IMR-90 (cell line): ENCODE measurements at regions of chr1 and their contacts with region 1.

Region 1: GRCh38 chr1:76957961-76958360 is 90.7 kb downstream of the ST6GALNAC5 start:
- DNase-seq: no peak
- ATAC-seq: no peak
- H3K4me3 ChIP-seq: no peak overlapping the region
- H3K27ac ChIP-seq: no peak overlapping the region
- H3K4me1 ChIP-seq: no peaks in the 10 kb centered on the region
- H3K27me3 ChIP-seq: no peaks in the 10 kb centered on the region
- CTCF ChIP-seq: no peak
- POLR2A ChIP-seq: no peak
- RAD21 ChIP-seq: no peak

Region 2: GRCh38 chr1:76939050-76939816 is 18.7 kb before region 1 on chr1:
- CTCF ChIA-PET with region 1: no interaction called
- POLR2A ChIA-PET with region 1: no interaction called
- dilution Hi-C with region 1: no loop called
- in situ Hi-C with region 1: no loop called
- intact Hi-C with region 1: no loop called
- DNase-seq: peak; percentile 37
- ATAC-seq: no peak
- H3K4me3 ChIP-seq: no peak overlapping the region
- H3K27ac ChIP-seq: no peak overlapping the region
- H3K4me1 ChIP-seq: no peaks in the 10 kb centered on the region; the same call in 1 of the 2 replicates
- H3K27me3 ChIP-seq: peaks cover 1% of the 10 kb centered on the region; the same call in 1 of the 2 replicates
- CTCF ChIP-seq: no peak
- POLR2A ChIP-seq: no peak
- RAD21 ChIP-seq: no peak

Region 3: GRCh38 chr1:76989976-76990375 is 32.0 kb after region 1 on chr1:
- CTCF ChIA-PET with region 1: no interaction called
- POLR2A ChIA-PET with region 1: no interaction called
- dilution Hi-C with region 1: no loop called
- in situ Hi-C with region 1: no loop called
- intact Hi-C with region 1: loop called (anchors 1 kb)
- DNase-seq: peak; percentile 18
- ATAC-seq: peak; percentile 61
- H3K4me3 ChIP-seq: no peak overlapping the region
- H3K27ac ChIP-seq: no peak overlapping the region
- H3K4me1 ChIP-seq: no peaks in the 10 kb centered on the region
- H3K27me3 ChIP-seq: no peaks in the 10 kb centered on the region; the same call in 1 of the 2 replicates
- CTCF ChIP-seq: no peak
- POLR2A ChIP-seq: no peak
- RAD21 ChIP-seq: no peak